AG04449 (cell line): ENCODE measurements at regions of chr3 and their contacts with region 1.

Region 1: GRCh38 chr3:112979240-112979832 is 4.4 kb upstream of the CD200R1 start:
- DNase-seq: peak; percentile 5
- H3K4me3 ChIP-seq: no peak overlapping the region
- CTCF ChIP-seq: peak; percentile 30

Region 2: DNA sequence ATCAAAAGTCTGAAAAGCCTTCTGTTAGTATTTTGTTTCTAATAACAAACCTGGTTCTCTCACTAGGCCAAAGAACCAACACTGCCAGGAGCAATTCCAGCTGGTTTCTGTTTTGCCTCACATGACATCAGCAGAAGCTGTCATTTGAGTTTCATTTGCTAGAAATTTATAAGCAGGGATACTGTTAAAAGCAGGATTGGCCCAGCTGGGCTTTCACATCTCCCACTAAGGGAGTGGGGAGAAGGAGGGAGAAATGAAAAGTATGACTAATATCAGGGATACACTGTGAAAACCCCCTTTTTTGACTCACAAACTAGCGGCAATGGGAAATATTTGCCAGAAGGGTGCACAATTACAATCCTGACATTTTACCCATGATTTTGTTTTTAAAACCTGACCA is 343.7 kb before region 1 on chr3:
- CTCF ChIA-PET with region 1: interaction called, 76 read pairs
- POLR2A ChIA-PET with region 1: no interaction called
- DNase-seq: peak; percentile 69
- H3K4me3 ChIP-seq: peak overlapping the region; percentile 74
- CTCF ChIP-seq: peak; percentile 4

Region 3: DNA sequence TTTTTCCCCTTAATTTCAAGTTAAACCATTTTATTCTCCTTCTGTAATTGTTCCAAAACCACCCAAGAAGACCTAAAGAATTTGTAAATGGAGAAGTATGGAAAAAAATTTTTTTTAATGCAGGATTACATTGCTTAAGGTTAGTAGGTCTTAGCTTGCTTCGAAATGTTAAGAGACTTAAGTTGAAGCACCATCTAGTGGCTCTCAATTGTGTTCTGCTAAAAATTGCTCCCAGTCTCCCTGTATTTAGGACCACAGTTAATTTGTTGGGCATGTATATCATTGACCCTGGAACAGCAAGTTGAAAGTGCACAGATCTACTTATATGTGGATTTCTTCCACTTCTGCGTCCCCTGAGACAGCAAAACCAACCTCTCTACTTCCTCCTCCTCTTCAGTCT is 165.1 kb before region 1 on chr3:
- CTCF ChIA-PET with region 1: interaction called, 20 read pairs
- POLR2A ChIA-PET with region 1: no interaction called
- DNase-seq: peak; percentile 69
- H3K4me3 ChIP-seq: no peak overlapping the region
- CTCF ChIP-seq: peak; percentile 56

Region 4: GRCh38 chr3:112925560-112925959 is 53.8 kb before region 1 on chr3:
- CTCF ChIA-PET with region 1: no interaction called
- POLR2A ChIA-PET with region 1: no interaction called
- DNase-seq: no peak
- H3K4me3 ChIP-seq: no peak overlapping the region
- CTCF ChIP-seq: no peak

Region 5: DNA sequence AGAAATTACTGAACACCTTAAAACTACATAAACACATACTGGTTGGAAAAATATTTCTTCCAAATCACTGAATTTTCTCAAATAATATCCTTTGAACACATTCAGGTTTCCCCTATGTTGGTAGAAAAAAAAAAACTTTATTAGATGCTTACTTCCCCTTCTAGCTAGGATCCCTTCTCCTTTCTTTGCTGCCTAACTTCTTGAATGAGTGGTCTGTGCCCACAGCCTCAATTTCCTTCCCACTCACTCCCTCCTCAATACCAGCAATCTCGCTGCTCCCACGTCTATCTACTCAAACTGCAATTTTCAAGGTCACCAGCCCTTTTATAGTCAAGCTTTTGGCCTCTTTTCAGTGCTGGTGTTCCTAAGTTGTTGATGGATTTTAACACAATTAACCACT is 12.7 kb before region 1 on chr3:
- CTCF ChIA-PET with region 1: interaction called, 17 read pairs
- POLR2A ChIA-PET with region 1: no interaction called
- DNase-seq: no peak
- H3K4me3 ChIP-seq: no peak overlapping the region
- CTCF ChIP-seq: no peak

Region 6: GRCh38 chr3:112990672-112991602 is 11.6 kb after region 1 on chr3 and contains the start of gene GTPBP8:
- CTCF ChIA-PET with region 1: interaction called, 51 read pairs
- POLR2A ChIA-PET with region 1: no interaction called
- DNase-seq: peak; percentile 29
- H3K4me3 ChIP-seq: peak within 1 kb of the TSS; percentile 96
- CTCF ChIP-seq: peak; percentile 18

Region 7: DNA sequence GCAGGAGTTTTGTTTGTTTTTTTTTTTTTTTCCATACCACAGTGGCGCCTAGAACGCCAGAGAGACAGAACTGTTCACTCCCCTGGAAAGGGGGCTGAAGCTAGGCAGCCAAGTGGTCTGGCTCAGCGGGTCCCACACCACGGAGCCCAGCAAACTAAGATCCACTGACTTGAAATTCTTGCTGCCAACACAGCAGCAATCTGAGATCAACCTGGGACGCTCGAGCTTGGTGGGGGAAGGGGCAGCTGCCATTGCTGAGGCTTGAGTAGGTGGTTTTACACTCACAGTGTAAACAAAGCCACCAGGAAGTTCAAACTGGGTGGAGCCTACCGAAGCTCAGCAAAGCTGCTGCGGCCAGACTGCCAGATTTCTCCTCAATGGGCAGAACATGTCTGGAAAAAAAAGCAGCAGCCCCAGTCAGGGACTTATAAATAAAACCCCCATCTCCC is 505.8 kb after region 1 on chr3:
- CTCF ChIA-PET with region 1: no interaction called
- POLR2A ChIA-PET with region 1: no interaction called
- DNase-seq: no peak
- H3K4me3 ChIP-seq: no peak overlapping the region
- CTCF ChIP-seq: no peak